Endothelial cell of umbilical vein (primary cell): ENCODE measurements at regions of chr6 and their contacts with region 1.

Region 1: GRCh38 chr6:27838058-27838944 is 73.9 kb downstream of the OR2B2 start:
- DNase-seq: peak; percentile 100
- H3K4me3 ChIP-seq: peak overlapping the region; percentile 25 to 86 (median 59)
- H3K27ac ChIP-seq: peak overlapping the region; percentile 95
- H3K4me1 ChIP-seq: peaks cover 14% of the 10 kb centered on the region
- H3K27me3 ChIP-seq: no peaks in the 10 kb centered on the region
- CTCF ChIP-seq: no peak
- POLR2A ChIP-seq: peak; percentile 87

Region 2: DNA sequence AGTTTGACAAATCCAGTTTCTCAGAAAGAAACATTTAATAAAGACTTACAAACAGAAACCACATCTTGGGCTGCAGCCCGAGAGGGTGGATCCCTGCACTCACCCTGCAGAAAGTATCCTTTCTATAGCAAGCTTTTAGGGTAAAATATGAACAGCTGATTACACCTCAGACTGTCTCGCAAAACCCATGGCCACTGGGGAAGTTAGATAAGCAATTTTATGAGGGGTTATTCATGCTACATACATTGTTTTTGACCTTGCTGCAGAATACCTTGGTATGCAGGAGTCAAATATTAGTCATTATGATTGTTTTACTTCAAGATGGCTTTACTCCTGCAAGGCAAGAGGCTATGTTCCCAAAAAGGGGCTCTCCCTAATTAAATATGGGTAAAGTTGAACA is 53.0 kb before region 1 on chr6:
- CTCF ChIA-PET with region 1: no interaction called
- POLR2A ChIA-PET with region 1: no interaction called
- dilution Hi-C with region 1: no loop called
- intact Hi-C with region 1: no loop called
- DNase-seq: no peak
- H3K4me3 ChIP-seq: no peak overlapping the region
- H3K27ac ChIP-seq: no peak overlapping the region
- H3K4me1 ChIP-seq: no peaks in the 10 kb centered on the region
- H3K27me3 ChIP-seq: peaks cover 18 to 19% of the 10 kb centered on the region in 2 experiments
- CTCF ChIP-seq: no peak
- POLR2A ChIP-seq: no peak

Region 3: GRCh38 chr6:27825025-27825793 is 13.1 kb before region 1 on chr6:
- CTCF ChIA-PET with region 1: interaction called, 12 read pairs
- POLR2A ChIA-PET with region 1: interaction called, 31 read pairs
- dilution Hi-C with region 1: no loop called
- intact Hi-C with region 1: loop called (anchors 1 kb)
- DNase-seq: peak; percentile 49
- H3K4me3 ChIP-seq: peak overlapping the region; percentile 44 to 97 (median 73)
- H3K27ac ChIP-seq: peak overlapping the region; percentile 91
- H3K4me1 ChIP-seq: peaks cover 8% of the 10 kb centered on the region
- H3K27me3 ChIP-seq: no peaks in the 10 kb centered on the region
- CTCF ChIP-seq: no peak
- POLR2A ChIP-seq: no peak

Region 4: DNA sequence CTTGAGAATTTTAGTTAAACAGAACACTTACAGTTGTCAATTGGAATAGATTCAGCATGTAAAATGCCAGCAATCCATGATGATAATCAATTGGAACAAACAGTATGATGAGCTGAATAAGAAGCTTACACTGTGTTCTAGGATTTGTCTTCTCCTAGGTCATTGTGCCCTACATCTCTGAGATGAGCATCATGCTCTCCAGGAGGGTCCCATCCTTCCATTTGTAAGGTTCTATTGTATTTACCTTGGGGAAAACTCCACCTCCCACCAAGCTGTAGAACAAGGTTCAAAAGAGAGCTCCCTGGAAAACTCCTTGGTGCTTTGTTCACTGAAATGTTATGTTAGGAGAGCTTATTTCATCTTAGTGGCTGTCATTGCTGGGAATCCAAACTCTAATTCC is 13.1 kb after region 1 on chr6:
- CTCF ChIA-PET with region 1: interaction called, 3 read pairs
- POLR2A ChIA-PET with region 1: no interaction called
- dilution Hi-C with region 1: no loop called
- intact Hi-C with region 1: loop called (anchors 1 kb)
- DNase-seq: no peak
- H3K4me3 ChIP-seq: no peak overlapping the region
- H3K27ac ChIP-seq: no peak overlapping the region
- H3K4me1 ChIP-seq: no peaks in the 10 kb centered on the region
- H3K27me3 ChIP-seq: peaks cover 17 to 18% of the 10 kb centered on the region in 2 experiments
- CTCF ChIP-seq: no peak
- POLR2A ChIP-seq: no peak